ENCODE measurements at regions of chrX and their contacts with region 1.

Region 1: DNA sequence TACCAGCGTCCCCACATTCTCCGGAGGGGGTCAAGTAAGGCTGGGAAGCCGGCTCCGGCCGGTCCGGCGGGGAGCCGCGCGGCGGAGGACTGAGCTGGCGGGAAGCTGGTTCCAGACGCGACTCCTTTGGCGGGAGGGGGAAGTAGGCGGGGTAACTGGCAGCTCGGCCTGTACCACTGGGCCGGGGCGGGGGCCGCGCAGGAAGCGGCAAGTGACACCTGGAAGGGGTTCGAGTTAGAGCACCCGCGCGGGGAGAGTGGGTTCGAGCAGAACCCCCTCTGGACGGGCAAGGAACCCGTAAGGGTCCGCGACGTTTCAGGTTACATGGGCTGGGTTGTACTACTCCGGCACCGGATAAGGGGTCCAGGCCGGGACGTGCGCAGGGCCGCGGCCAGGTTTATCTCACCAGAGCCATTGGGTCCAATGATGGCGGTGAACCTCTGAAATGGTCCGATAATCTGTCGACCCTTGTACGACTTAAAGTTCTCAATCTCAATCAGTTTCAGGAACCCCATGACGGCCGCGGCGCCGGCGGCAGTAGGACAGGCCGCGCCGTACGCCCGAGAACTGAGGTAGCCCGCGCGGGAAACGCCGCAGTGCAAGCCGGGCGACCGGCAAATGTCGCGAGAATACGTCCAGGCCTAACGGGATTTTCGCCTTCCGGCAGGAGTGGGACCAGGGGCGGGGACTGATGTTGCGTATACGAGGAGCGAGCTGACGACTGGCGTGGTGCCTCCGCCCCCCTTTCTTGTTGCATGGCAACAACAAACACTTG is at the start of gene SMC1A:
- H3K4me3 ChIP-seq: peak within 1 kb of the TSS; percentile 76
- H3K27ac ChIP-seq: peak within 1 kb of the TSS; percentile 99
- H3K4me1 ChIP-seq: peaks cover 6% of the 10 kb centered on the region
- CTCF ChIP-seq: peak; percentile 30; the same call in 1 of the 2 replicates

Region 2: GRCh38 chrX:53374222-53374820 is 48.0 kb before region 1 on chrX:
- CTCF ChIA-PET with region 1: no interaction called
- POLR2A ChIA-PET with region 1: interaction called, 29 read pairs
- H3K4me3 ChIP-seq: no peak overlapping the region
- H3K27ac ChIP-seq: no peak overlapping the region
- H3K4me1 ChIP-seq: no peaks in the 10 kb centered on the region
- CTCF ChIP-seq: no peak; the same call in 1 of the 2 replicates

Region 3: DNA sequence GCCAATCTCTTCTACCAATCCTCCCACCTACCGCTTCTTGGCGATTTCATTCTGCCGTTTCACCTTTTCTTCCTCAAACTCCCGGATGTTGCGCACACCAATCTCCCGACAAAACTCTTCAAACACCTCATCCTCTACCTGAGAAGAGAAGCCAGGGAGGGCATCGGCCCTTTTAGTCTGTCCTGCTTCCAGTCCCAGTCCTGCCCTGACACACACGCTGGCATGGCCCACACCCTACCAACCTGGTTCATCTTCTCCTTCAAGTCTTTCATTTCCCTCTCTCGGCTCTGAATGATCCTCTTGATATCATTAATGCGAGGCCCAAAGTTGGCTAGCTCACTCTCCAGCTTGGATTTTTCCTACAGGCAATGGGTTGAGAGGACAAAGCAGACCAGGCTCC is 18.7 kb before region 1 on chrX:
- CTCF ChIA-PET with region 1: no interaction called
- POLR2A ChIA-PET with region 1: interaction called, 15 read pairs
- H3K4me3 ChIP-seq: no peak overlapping the region
- H3K27ac ChIP-seq: no peak overlapping the region
- H3K4me1 ChIP-seq: no peaks in the 10 kb centered on the region
- CTCF ChIP-seq: no peak

Region 4: DNA sequence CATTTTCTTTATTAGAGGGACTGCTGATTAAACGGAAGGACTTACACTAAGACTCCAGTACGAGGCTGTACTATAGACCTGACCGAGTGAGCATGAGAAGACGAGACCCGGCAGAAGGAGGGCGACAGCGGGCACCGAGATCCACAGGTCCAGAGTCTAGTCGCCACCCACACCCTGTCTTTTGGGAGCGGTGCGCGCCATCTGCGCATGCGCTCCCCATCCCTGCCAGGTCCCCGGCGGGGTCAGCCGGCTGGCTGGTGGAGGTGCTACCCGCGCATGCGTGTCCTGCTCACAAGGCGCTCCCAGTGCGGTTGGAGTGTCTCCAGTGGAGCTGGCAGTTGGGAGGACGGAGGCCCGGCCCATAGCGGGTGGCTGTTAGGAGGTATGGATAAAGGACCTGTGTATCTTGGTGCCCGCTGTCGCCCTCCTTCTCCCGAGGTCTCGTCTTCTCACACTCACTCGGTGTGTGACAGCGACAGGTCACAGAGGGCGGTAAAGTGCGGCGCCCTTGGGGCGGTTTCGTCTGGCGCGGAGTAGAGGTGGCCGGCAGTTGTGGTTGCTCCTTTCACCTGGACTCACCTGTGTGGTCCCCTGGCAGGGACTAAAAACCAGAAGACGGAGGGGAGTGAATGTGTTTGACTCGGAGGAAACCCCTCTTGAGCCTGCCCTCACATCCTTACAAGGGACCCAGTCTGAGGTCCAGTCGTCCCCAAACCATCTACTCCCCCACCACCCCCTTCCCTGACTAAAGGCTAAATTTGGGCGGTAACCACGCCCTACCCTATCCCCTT is 19.5 kb after region 1 on chrX:
- CTCF ChIA-PET with region 1: interaction called, 87 read pairs
- POLR2A ChIA-PET with region 1: interaction called, 36 read pairs
- H3K4me3 ChIP-seq: peak overlapping the region; percentile 48
- H3K27ac ChIP-seq: peak overlapping the region; percentile 61; the same call in 1 of the 2 replicates
- H3K4me1 ChIP-seq: peaks cover 3% of the 10 kb centered on the region; the same call in 1 of the 2 replicates
- CTCF ChIP-seq: no peak

Measured in HEK293 (cell line).